Calu3 (cell line): ENCODE measurements at regions of chr11 and their contacts with region 1.

Region 1: DNA sequence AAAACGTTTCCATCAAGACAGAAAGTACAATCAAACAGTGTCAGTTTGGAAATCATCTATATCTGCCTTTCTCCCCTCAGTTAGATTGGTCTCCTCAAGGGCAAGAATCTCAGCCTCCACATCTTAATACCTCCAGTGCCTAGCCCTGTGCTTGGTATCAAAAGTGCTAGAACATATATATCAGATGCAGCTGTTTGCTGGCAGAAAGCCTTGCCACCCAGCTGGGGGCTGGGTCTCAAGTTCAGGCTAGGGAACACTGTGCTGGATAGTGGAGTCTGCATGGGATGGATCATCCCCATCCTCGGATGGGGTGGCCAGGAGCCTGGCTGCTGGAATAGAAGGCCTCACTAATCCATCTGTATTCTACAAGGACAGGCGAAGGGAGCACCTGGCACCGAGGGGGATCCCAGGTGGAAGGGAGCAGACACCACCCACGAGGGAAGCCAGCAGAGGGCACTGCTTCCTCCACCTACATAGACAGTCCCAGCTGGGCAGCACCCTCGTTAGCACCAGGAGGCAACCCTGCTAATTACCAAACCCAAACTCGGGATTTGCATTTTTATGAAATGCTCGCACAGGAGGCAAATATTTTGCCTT is 602.2 kb downstream of the BUD13 start:
- DNase-seq: peak; percentile 32
- H3K4me3 Mint-ChIP-seq: no peak overlapping the region
- H3K27ac Mint-ChIP-seq: no peak overlapping the region
- H3K4me1 Mint-ChIP-seq: no peaks in the 10 kb centered on the region
- H3K27me3 Mint-ChIP-seq: peaks cover 70% of the 10 kb centered on the region
- CTCF ChIP-seq: no peak

Region 2: DNA sequence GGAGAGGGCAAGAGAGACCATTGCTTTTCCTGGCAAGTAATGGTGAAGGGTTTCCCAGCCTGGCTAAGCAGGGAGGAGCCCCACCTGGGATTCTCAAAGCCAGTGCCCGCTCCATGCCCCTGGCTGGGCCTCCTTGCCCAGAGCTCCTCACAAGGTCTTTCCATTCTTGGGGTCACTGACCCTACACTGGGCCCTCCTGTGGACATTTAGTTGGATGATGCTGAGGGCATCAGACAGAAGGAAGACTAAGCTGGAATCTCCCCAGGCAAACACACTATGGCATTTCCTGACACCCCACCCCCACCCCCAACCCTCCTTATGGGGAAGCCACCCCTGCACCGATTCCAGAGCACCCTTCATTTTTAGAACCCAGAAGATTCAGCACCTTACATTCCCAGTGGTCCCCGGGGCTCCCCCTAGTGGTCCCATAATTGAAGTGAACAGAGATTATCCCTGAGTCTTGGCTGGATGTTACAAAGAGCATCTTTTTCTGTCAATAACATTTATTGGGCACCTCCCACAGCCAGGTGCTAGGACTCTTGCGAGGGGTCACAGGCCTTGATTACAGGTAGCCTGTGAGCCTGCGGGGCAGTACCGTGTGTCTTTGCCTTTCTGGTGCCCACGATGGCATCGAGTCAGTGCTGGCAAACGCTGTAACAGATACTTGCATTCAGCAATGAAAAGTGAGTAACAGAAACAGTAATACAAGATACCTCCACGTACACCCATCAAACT is 53.7 kb after region 1 on chr11:
- CTCF ChIA-PET with region 1: no interaction called
- intact Hi-C with region 1: loop called (anchors 2 kb)
- DNase-seq: peak; percentile 44
- H3K4me3 Mint-ChIP-seq: no peak overlapping the region
- H3K27ac Mint-ChIP-seq: no peak overlapping the region
- H3K4me1 Mint-ChIP-seq: no peaks in the 10 kb centered on the region
- H3K27me3 Mint-ChIP-seq: peaks cover 68% of the 10 kb centered on the region
- CTCF ChIP-seq: peak; percentile 20